ENCODE measurements at regions of chr9 and their contacts with region 1.

Region 1: DNA sequence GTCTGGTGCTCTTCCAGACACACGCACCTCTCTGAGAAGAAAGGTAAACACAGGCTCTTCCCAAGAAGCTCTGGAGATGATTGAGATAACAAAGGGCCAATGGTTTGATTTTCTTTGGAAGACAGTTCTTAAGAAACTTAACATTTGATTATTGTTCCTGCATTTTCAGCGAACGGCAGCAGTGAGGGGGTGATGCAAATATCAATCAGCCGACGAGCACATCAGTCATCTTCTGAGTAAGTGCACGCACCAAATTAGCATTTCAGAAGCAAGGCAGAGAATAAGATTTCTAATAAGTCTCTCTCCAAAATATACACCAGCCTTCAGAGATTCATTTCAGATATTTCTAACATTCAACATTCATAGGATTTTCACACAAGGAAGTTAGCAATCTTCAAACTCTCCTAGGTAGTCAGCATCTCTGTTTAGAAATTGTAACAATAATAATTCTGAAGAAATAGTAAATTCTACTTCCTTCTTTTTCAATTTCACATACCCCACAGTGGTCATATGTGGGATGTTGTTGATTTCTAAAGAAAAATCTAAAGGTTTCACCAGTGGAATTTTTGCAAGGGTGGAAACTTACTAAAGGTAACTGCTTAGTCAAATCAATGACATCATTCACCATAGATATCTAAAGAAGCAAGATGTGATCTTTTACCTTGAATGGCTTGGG is 250.3 kb downstream of the SEC61B start:
- DNase-seq: peak; percentile 33
- H3K4me3 Mint-ChIP-seq: no peak overlapping the region
- H3K27ac Mint-ChIP-seq: peak overlapping the region; percentile 48
- H3K4me1 Mint-ChIP-seq: peaks cover 5% of the 10 kb centered on the region
- H3K27me3 Mint-ChIP-seq: peaks cover 12% of the 10 kb centered on the region

Region 2: DNA sequence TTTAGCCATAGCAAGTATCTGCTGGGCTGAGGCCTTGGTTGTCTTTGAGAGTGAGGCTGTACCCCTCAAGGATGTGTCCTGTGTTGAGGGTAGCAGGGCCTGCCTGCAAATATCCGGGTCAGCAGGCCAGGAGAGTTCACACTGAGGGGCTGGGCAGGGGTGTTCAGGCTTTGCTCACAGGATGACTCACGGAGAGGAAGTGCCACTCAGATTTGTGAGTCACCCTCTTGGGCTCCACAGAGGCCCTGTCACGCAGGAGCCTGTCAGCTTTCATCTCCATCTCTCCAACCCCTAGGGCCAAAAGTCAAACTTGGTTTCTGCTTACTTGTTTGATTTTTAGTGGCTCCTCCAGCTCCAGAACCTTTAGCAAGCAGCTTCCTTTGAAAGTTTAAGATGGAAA is 38.8 kb before region 1 on chr9:
- intact Hi-C with region 1: loop called (anchors 1 kb)
- DNase-seq: peak; percentile 83
- H3K4me3 Mint-ChIP-seq: no peak overlapping the region
- H3K27ac Mint-ChIP-seq: peak overlapping the region; percentile 69
- H3K4me1 Mint-ChIP-seq: peaks cover 21% of the 10 kb centered on the region
- H3K27me3 Mint-ChIP-seq: no peaks in the 10 kb centered on the region

Measured in activated CD4-positive, alpha-beta T cell treated with anti-CD3 and anti-CD28 coated beads, Interleukin-2, amount 10 ng/mL, durations not matched to agents 24 days and 14 days (primary cell).